ENCODE measurements at regions of chr14 and their contacts with region 1.

Region 1: GRCh38 chr14:61347826-61348443 is 26.6 kb downstream of the PRKCH start:
- DNase-seq: peak in 1 of 35 experiments; percentile 42
- ATAC-seq: no peak
- H3K4me3 ChIP-seq: peak overlapping the region; percentile 0 to 20
- H3K4me3 Mint-ChIP-seq: peak overlapping the region; percentile 74 to 83 (median 75)
- H3K27ac ChIP-seq: peak overlapping the region; percentile 81
- H3K27ac Mint-ChIP-seq: peak overlapping the region; percentile 96 to 100
- H3K4me1 ChIP-seq: peaks cover 87 to 91% of the 10 kb centered on the region in 2 experiments
- H3K4me1 Mint-ChIP-seq: peaks cover 3 to 99% (median 99%) of the 10 kb centered on the region in 3 donors
- H3K27me3 ChIP-seq: no peaks in the 10 kb centered on the region
- H3K27me3 Mint-ChIP-seq: no peaks in the 10 kb centered on the region

Region 2: GRCh38 chr14:61360796-61361525 is 13.0 kb after region 1 on chr14:
- CTCF ChIA-PET with region 1: interaction called, 4 to 9 read pairs
- POLR2A ChIA-PET with region 1: interaction called, 3 to 17 read pairs
- DNase-seq: peak in 1 of 35 experiments; percentile 5
- ATAC-seq: peak; percentile 26 to 58 (median 42)
- H3K4me3 ChIP-seq: no peak overlapping the region
- H3K4me3 Mint-ChIP-seq: peak overlapping the region; percentile 23 to 67 (median 28)
- H3K27ac ChIP-seq: peak overlapping the region; percentile 21
- H3K27ac Mint-ChIP-seq: peak overlapping the region; percentile 75 to 77
- H3K4me1 ChIP-seq: peaks cover 71 to 75% of the 10 kb centered on the region in 2 experiments
- H3K4me1 Mint-ChIP-seq: peaks cover 0 to 57% (median 57%) of the 10 kb centered on the region in 3 donors
- H3K27me3 ChIP-seq: no peaks in the 10 kb centered on the region
- H3K27me3 Mint-ChIP-seq: no peaks in the 10 kb centered on the region